ENCODE measurements at regions of chr3 and their contacts with region 1.

Region 1: DNA sequence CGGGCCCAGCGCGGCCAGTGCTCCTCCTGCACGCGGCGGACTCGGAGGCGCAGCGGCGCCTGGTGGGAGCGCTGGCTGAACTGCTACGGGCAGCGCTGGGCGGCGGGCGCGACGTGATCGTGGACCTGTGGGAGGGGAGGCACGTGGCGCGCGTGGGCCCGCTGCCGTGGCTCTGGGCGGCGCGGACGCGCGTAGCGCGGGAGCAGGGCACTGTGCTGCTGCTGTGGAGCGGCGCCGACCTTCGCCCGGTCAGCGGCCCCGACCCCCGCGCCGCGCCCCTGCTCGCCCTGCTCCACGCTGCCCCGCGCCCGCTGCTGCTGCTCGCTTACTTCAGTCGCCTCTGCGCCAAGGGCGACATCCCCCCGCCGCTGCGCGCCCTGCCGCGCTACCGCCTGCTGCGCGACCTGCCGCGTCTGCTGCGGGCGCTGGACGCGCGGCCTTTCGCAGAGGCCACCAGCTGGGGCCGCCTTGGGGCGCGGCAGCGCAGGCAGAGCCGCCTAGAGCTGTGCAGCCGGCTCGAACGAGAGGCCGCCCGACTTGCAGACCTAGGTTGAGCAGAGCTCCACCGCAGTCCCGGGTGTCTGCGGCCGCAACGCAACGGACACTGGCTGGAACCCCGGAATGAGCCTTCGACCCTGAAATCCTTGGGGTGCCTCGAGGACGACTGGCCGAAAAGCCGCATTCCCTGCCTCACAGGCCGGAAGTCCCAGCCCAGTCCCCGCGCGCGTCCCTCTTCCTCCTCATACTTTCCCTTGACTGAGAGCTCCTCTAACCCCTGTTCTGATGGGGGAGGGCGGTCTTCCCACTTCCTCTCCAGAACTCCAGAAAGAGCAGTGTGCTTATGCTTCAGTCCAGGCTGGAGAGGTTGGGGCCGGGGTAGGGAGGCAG is 1.4 kb upstream of the IL17RC start:
- DNase-seq: peak; percentile 89
- ATAC-seq: peak; percentile 60

Region 2: GRCh38 chr3:9503283-9503682 is 412.2 kb before region 1 on chr3:
- intact Hi-C with region 1: loop called (anchors 10 kb)
- DNase-seq: peak; percentile 80
- ATAC-seq: no peak

Region 3: GRCh38 chr3:9862391-9863057 is 53.0 kb before region 1 on chr3:
- intact Hi-C with region 1: loop called (anchors 10 kb)
- DNase-seq: peak; percentile 84
- ATAC-seq: peak; percentile 87

Region 4: DNA sequence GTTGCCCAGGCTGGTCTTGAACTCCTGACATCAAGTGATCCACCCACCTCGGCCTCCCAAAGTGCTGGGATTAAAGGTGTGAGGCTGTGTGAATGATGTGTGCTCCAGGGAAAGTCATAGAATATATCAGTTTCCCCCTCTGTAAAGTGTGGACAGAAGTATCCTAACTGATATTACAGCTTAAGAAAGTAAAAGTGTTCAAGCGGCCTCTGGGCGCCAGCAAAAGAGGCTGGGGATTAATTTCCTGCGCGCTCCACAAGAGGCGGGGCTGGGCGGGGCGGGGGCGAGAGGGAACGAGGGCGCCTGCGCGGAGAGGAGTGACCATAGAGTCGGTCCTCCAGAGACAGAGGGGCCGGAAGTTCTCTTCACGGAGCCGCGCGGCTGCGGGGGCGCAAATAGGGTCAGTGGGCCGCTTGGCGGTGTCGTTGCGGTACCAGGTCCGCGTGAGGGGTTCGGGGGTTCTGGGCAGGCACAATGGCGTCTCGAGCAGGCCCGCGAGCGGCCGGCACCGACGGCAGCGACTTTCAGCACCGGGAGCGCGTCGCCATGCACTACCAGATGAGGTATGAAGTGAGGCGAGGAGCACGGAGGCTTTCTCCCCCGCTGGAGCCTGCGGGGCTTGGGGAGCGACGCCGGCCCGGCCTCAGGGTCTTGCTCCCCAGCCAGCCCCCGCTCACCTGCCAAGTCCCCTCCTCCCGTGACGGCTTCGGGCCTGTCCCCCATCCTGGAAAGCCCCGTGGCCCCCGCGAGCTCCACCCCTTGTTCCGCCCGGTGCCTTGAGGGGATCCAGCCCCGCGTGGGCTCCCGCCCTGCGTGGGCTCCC is 25.0 kb before region 1 on chr3 and contains the start of gene JAGN1:
- intact Hi-C with region 1: loop called (anchors 2 kb)
- DNase-seq: peak; percentile 94
- ATAC-seq: peak; percentile 98
- total RNA-seq, gene JAGN1: 19.1 TPM

Region 5: GRCh38 chr3:9994086-9994844 is 78.8 kb after region 1 on chr3:
- intact Hi-C with region 1: no loop called
- DNase-seq: no peak
- ATAC-seq: no peak

Region 6: DNA sequence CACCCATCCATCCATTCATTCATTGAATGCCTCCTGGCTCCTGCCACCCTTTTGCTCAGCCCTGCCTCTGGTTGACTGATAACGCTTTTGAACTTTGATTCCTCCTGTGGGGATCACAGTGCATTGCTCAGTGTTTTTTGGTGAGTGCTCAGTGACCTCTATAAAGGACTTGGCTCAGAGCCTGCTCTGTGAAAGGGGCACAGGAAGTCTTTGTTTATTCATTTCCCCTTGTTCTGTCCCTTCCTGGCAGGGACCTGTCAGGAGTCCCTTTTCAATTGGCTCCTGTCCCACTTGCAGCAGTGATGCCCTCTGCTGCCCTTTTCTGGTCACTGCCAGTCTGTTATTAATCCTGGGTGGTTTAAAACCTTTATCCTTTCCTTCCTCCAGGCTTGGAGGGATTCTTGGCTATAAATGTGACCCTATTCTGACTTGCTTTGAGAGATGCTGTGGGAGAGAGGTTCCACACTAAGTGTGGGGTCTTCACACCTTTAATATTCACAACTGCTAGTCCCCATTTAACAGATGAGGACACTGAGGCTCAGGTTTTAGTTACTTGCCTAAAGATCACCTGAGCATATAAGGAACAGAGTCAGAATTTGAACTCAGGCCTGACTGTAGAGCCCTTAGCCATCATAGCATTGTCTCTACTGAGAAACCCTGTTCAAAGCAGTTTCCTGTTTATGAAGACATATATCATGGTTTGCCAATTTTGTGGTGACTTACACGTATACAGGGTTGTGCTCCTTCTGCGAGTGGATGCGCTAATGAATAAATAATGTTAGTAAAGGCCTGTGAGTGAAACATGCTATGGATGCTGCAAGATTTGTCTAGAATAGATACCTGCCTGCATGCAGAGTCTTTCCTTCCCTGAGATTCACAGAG is 309.5 kb after region 1 on chr3:
- intact Hi-C with region 1: no loop called
- DNase-seq: no peak
- ATAC-seq: peak; percentile 92